ENCODE measurements at regions of chr16 and their contacts with region 1.

Region 1: GRCh38 chr16:69930117-69930776 is 20.9 kb upstream of the CLEC18A start:
- DNase-seq: no peak
- H3K4me3 ChIP-seq: no peak overlapping the region
- H3K27ac ChIP-seq: no peak overlapping the region
- H3K27me3 ChIP-seq: no peaks in the 10 kb centered on the region
- CTCF ChIP-seq: peak; percentile 76

Region 2: GRCh38 chr16:69754469-69755310 is 175.6 kb before region 1 on chr16 and contains the start of gene NOB1:
- CTCF ChIA-PET with region 1: interaction called, 10 read pairs
- POLR2A ChIA-PET with region 1: no interaction called
- DNase-seq: peak; percentile 95
- H3K4me3 ChIP-seq: peak within 1 kb of the TSS; percentile 100
- H3K27ac ChIP-seq: peak within 1 kb of the TSS; percentile 11
- H3K27me3 ChIP-seq: peaks cover 4% of the 10 kb centered on the region
- CTCF ChIP-seq: peak; percentile 99
- polyA plus RNA-seq, gene NOB1: 58.7 TPM in 2 replicates

Region 3: GRCh38 chr16:69761983-69762813 is 168.0 kb before region 1 on chr16 and contains the start of gene WWP2:
- CTCF ChIA-PET with region 1: interaction called, 12 read pairs
- POLR2A ChIA-PET with region 1: no interaction called
- DNase-seq: peak; percentile 16
- H3K4me3 ChIP-seq: peak within 1 kb of the TSS; percentile 98
- H3K27ac ChIP-seq: peak within 1 kb of the TSS; percentile 80
- H3K27me3 ChIP-seq: peaks cover under 1% of the 10 kb centered on the region
- CTCF ChIP-seq: no peak
- polyA plus RNA-seq, gene WWP2: 13.1 and 13.4 TPM in 2 replicates

Region 4: DNA sequence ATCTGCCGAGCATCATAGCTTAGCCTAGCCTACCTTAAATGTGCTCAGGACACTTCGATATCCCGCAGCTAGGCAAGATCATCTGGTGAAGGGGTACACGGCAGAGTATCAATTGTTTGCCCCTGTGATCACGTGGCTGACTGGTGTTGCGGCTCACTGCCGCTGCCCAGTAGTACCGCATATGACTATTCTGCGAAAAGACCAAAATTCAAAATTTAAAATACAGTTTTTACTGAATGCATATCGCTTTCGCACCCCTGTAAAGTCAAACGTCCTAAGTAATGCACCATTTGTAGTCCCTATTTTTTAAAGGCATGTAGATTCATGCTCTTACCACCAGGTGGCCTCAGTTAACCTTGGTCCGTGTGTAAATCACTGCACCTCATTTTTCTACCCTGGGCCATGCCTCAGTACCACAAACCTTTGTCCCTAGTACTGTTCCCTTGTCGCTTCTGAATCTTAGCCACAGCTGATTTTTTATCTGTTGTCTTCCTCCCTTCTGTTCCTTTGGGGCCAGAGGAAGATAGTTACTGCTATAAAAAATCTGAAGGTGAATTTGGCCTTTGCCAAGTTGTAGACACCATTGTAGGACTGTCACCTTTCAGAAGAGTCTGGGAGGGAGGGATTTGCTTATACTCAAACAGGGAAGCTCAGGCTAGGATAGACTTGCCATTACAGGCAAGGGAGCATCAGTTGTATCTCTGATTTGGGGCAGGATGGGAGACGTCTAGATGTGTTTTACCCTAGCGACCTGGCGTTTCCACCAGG is 133.7 kb before region 1 on chr16:
- CTCF ChIA-PET with region 1: interaction called, 216 read pairs
- POLR2A ChIA-PET with region 1: interaction called, 3 read pairs
- DNase-seq: peak; percentile 42
- H3K4me3 ChIP-seq: no peak overlapping the region
- H3K27ac ChIP-seq: no peak overlapping the region
- H3K27me3 ChIP-seq: no peaks in the 10 kb centered on the region
- CTCF ChIP-seq: peak; percentile 91

Region 5: DNA sequence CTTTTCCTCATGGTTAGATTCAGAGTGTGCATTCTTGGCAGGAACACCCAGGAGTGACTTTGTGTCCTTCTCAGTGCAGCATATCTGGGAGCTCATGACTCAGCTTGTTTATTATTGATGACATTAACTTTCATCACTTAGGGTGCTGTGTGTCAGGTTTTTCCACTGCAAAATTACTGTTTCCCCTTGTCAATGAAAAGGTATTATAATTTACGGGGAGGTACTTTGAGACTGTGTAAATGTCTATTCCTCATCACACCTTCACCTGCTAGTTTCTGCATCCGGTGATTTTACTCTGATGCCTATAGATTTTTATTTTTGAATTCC is 117.6 kb before region 1 on chr16:
- CTCF ChIA-PET with region 1: interaction called, 14 read pairs
- POLR2A ChIA-PET with region 1: no interaction called
- DNase-seq: no peak
- H3K4me3 ChIP-seq: no peak overlapping the region
- H3K27ac ChIP-seq: no peak overlapping the region
- H3K27me3 ChIP-seq: no peaks in the 10 kb centered on the region
- CTCF ChIP-seq: no peak

Region 6: DNA sequence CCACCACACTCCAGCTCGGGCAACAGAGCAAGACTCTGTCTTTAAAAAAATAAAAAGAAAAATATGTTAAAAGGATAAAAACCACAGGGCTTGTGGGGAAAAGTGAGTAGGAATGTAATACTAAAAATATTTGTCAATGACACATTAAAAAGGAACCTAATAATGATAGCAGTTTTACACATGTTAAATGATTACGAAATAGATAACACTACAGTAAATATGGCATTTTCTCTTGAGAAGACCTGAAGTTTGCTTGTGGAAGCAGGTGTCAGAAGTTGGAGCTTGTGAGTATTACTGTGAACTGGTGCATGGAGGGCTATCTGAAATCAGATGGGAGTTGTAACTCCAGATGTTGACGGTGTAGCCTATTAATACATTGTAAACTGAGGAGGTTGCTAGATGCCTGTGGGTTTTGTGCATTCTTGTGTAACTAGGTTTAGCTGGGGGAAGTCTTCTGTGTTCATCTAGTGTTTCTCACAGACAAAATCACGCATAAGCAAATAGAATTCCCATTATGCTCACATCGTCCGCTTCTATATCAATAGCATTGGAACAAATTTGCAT is 23.3 kb before region 1 on chr16:
- CTCF ChIA-PET with region 1: interaction called, 18 read pairs
- POLR2A ChIA-PET with region 1: no interaction called
- DNase-seq: peak; percentile 86
- H3K4me3 ChIP-seq: no peak overlapping the region
- H3K27ac ChIP-seq: peak overlapping the region; percentile 90
- H3K27me3 ChIP-seq: no peaks in the 10 kb centered on the region
- CTCF ChIP-seq: no peak

Region 7: GRCh38 chr16:69917739-69918138 is 12.5 kb before region 1 on chr16:
- CTCF ChIA-PET with region 1: interaction called, 21 read pairs
- POLR2A ChIA-PET with region 1: interaction called, 3 read pairs
- DNase-seq: peak; percentile 86
- H3K4me3 ChIP-seq: peak overlapping the region; percentile 20
- H3K27ac ChIP-seq: peak overlapping the region; percentile 96
- H3K27me3 ChIP-seq: no peaks in the 10 kb centered on the region
- CTCF ChIP-seq: no peak

Region 8: DNA sequence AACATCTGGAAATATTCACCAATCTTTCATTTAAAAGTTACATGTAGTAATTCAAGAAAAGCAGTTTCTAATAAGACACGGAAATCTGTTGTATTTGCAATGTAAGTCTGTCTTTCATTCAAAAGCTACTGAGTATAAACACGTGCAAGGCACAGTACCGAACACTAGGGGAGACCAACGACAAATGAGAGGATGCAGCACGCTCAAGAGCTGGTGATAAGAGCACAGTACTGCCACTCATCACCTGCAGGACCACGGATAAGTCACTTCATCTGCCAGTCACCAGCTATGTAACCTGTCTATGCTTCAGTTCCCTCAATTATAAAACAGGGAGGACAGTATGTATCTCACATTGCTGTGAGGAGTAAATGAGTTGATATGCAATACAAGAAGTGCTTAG is 88.0 kb after region 1 on chr16:
- CTCF ChIA-PET with region 1: no interaction called
- POLR2A ChIA-PET with region 1: no interaction called
- DNase-seq: no peak
- H3K4me3 ChIP-seq: no peak overlapping the region
- H3K27ac ChIP-seq: no peak overlapping the region
- H3K27me3 ChIP-seq: no peaks in the 10 kb centered on the region
- CTCF ChIP-seq: no peak

Measured in AG04450 (cell line).